Prostate gland (tissue), 2 donors: ENCODE measurements at regions of chr5 and their contacts with region 1.

Region 1: DNA sequence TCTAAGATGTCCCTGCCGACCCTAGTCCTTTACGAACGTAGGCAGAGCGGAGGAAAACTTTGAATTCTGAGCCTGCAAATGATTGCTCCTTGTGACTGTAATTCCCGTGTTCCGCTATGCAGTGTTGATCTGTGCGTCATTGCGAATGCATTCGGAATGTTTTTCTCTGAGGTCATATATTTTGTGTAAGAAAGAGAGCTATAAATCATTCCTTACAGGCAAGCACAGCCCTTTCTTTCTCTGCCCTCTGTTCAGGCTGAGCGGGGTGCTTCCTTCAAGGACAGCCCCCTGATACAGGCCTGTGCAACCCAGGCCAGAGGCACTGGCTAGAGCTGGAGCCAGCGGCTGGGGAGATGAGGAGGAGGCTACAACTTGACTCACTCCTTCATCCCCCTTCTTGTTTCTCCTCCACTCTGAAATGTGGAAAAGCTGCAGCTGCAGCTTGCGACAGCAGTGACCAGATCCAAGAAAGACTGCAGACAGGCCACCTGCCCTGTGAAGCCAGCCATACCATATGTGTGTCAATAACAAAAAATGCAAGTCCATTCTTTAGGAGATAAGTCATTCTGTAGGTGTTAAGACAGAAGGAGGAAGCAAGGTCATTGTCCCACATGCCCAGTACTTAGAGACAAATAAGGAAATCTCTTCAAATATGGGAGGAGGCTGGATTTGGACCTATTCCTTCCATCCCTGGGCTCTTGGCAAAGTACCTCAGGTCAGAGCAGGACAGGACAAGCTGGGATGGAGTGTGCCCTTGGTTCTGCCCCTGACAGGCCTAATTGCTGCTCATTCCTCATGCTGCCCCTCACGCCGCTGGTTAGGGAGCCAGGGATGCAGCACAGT is 345.7 kb upstream of the WWC1 start:
- DNase-seq: no peak
- H3K4me3 ChIP-seq: no peak overlapping the region
- H3K27ac ChIP-seq: peak overlapping the region; percentile 42 to 54
- H3K4me1 ChIP-seq: no peaks in the 10 kb centered on the region
- H3K27me3 ChIP-seq: no peaks in the 10 kb centered on the region
- CTCF ChIP-seq: no peak
- POLR2A ChIP-seq: no peak

Region 2: DNA sequence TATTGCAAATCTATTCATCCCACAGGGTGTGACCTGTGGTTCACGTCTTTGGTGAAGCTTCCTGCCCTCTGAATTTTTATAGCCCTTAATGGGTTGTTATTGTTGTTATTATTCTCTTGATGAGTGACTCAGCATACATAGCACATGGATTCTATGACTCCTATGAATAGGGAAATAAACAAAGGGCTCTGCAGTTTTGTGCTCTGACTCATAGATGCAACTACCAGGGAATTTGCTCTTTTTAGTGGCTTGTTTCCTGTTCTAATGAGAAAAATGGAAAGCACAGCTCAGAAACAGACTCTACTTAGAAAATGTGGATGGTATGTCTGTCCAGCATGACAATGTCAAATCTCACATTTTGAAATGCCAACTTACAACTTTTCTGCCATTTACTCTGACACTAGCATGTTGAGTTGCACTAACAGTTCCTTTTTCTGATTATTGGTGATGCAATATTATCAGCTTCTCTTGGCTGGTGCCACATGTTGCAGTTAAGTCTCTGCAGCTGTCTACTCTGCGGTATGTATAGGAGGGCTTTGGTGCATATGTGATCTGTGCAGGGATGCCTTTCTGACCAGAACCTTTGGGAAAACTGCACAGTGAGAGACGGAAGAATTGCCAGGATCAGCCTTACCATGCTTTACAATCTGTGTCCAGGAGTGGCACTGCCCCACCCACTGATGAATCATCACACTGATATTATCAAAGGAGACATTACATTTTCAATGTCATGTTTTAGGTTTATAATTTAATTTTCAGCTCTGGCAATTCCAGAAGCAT is 650.7 kb before region 1 on chr5:
- intact Hi-C with region 1: no loop called
- DNase-seq: no peak
- H3K4me3 ChIP-seq: no peak overlapping the region
- H3K27ac ChIP-seq: no peak overlapping the region
- H3K4me1 ChIP-seq: no peaks in the 10 kb centered on the region
- H3K27me3 ChIP-seq: no peaks in the 10 kb centered on the region
- CTCF ChIP-seq: no peak
- POLR2A ChIP-seq: no peak

Region 3: GRCh38 chr5:167820101-167820990 is 125.4 kb before region 1 on chr5:
- intact Hi-C with region 1: loop called (anchors 10 kb)
- DNase-seq: peak; percentile 32
- H3K4me3 ChIP-seq: no peak overlapping the region
- H3K27ac ChIP-seq: no peak overlapping the region
- H3K4me1 ChIP-seq: no peaks in the 10 kb centered on the region
- H3K27me3 ChIP-seq: no peaks in the 10 kb centered on the region
- CTCF ChIP-seq: no peak
- POLR2A ChIP-seq: no peak

Region 4: GRCh38 chr5:167993771-167994170 is 48.0 kb after region 1 on chr5:
- intact Hi-C with region 1: no loop called
- DNase-seq: peak; percentile 13
- H3K4me3 ChIP-seq: no peak overlapping the region
- H3K27ac ChIP-seq: no peak overlapping the region
- H3K4me1 ChIP-seq: no peaks in the 10 kb centered on the region
- H3K27me3 ChIP-seq: no peaks in the 10 kb centered on the region
- CTCF ChIP-seq: no peak
- POLR2A ChIP-seq: no peak

Region 5: GRCh38 chr5:168006456-168007130 is 60.8 kb after region 1 on chr5:
- intact Hi-C with region 1: loop called (anchors 5 kb)
- DNase-seq: no peak
- H3K4me3 ChIP-seq: no peak overlapping the region
- H3K27ac ChIP-seq: no peak overlapping the region
- H3K4me1 ChIP-seq: no peaks in the 10 kb centered on the region
- H3K27me3 ChIP-seq: no peaks in the 10 kb centered on the region
- CTCF ChIP-seq: no peak
- POLR2A ChIP-seq: no peak

Region 6: GRCh38 chr5:168086104-168086610 is 140.4 kb after region 1 on chr5:
- intact Hi-C with region 1: loop called (anchors 10 kb)
- DNase-seq: peak; percentile 86
- H3K4me3 ChIP-seq: no peak overlapping the region
- H3K27ac ChIP-seq: peak overlapping the region; percentile 47 to 73
- H3K4me1 ChIP-seq: peaks cover 10% of the 10 kb centered on the region
- H3K27me3 ChIP-seq: no peaks in the 10 kb centered on the region
- CTCF ChIP-seq: peak in 3 of 4 experiments; percentile 29 to 70 (median 62)
- POLR2A ChIP-seq: no peak